ENCODE measurements at regions of chr6 and their contacts with region 1.

Region 1: DNA sequence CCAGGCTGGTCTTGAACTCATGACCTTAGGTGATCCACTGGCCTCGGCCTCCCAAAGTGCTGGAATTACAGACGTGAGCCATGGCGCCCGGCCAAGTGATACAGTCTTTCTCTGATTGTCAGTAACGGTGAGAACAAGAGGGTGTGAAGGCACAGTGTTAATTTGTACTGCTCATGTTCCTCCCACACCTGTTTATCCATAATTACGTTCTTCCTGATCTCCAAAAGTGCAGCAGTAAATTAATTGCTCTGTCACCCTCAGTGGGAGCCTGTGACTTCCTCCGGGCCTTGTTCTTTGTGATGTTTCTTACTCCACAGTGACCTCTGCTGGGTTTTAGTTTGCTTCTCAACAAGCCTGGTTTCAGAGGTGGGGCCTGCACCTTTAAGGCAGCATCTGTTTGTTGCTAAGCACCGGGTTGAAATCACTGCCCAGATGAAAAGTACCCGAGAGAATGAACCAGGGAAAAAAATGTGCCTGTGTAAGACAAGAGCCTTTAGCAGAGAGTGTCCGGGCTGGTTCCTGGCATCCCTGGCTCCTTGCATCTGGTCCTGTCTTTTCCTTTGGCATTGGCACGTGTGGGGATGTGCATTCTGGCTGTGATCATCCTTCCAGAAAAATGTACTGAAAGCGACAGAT is 89.1 kb upstream of the CLDN20 start:
- DNase-seq: peak in 1 of 2 donors; percentile 51
- ATAC-seq: peak; percentile 94

Region 2: GRCh38 chr6:154675602-154676088 is 499.0 kb before region 1 on chr6:
- intact Hi-C with region 1: loop called in 1 of 2 experiments (anchors 10 kb)
- DNase-seq: peak; percentile 80 to 90
- ATAC-seq: peak; percentile 100

Region 3: DNA sequence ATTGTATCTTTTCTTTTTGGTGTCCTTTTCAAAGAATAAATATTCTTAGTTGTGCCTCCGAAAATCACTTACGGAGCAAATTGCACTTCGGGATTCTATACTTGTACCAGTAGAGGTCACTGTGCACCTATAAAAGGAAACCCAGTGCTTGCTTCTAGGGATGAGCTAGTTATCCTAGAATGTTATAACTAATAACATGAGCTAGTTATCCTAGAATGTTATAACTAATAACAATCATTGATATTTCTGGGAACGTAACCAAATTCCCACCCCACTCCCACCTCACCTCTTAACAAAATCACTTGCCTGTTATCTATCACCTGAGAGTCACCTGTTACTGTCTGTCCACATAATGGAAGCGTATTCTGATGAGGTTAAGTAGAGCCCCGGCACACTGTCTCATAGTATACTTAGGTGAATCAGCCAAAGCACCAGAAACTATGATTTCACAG is 306.5 kb before region 1 on chr6:
- intact Hi-C with region 1: loop called in 1 of 2 experiments (anchors 10 kb)
- DNase-seq: no peak
- ATAC-seq: peak; percentile 56

Region 4: GRCh38 chr6:154928325-154928922 is 246.3 kb before region 1 on chr6:
- intact Hi-C with region 1: loop called (anchors 5 to 10 kb)
- DNase-seq: peak; percentile 33 to 67
- ATAC-seq: peak; percentile 76

Region 5: DNA sequence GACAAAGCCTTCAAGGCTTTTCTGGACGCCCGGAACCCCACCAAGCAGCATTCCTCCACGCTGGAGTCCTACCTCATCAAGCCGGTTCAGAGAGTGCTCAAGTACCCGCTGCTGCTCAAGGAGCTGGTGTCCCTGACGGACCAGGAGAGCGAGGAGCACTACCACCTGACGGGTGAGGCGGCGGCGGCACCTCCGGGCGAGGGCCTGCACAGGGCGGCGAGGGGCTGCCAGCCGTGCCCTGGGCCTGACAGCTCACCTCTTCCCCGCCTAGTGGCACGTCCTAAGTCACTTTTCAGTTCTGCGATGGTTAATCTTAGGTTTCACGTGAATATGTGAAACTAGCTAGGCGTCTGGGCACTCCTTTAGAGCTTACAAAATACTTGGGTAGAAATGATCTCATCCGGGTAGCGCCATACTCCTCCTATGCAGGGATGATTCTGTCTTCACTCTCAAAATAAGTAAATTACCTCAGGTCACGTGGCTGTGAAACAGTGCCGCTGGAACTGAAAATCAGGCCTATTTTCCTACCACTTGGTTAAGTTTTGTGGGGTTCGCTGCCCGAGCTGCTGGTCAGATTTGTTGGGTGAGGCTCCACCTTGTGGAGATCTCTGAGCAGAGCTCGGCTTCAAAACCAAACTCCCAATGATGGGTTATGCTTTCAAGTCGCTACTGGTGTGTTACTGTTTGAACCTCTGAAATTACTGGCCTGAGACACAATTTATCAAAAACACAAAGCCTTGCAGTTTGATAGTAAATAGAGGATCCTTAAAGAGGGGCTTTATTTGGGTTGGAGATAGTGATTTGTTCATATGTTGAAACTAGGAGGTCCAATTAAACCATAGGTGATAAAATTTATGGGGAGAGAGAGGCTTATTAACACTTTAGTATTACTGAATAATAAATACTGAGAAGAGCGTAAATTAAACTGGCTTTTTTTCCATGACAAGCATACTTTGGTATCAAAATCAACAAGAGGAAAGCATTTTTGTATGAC is 73.6 kb after region 1 on chr6:
- intact Hi-C with region 1: loop called in 1 of 2 experiments (anchors 2 kb)
- DNase-seq: peak; percentile 30 to 33
- ATAC-seq: peak; percentile 58

Region 6: DNA sequence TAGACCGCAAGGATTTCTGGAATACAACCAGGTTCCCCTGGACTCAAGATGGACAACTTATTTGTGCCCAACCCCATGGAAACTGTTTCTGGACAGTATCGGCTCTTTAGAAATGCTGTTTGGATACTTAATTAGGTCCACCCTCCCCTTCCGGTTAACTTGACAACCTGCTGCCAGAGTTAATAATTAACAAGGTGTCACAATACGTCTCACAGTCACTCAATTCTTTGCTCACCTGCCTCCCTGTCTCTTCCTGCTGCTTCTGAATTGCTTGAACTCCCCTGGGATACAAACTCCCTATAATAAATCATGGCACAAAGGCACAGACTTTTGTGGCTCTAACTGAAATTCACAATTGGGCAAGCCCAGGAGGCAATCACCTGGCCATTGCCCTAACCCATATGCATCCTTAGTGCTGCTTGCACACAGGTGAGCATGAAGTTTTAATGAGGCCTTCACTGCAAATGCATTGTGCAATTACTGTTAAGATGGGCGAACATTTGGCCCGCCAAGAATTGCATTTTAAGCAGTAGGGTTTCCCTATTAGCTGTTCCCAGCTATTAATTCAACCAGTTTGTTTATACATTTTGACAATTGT is 785.3 kb after region 1 on chr6:
- intact Hi-C with region 1: no loop called
- DNase-seq: peak in 1 of 2 donors; percentile 35
- ATAC-seq: peak; percentile 89